Activated T-helper 1 cell treated with anti-CD3 and anti-CD28 coated beads, Interleukin-12 subunit alpha, Interleukin-12 subunit beta, Interleukin-2, Interleukin-4 antibody, amounts not matched to agents 30 ng/mL and 10 ng/mL and 1 ng/mL, durations not matched to agents 14 hours and 24 hours and 36 hours (primary cell): ENCODE measurements at regions of chr6 and their contacts with region 1.

Region 1: DNA sequence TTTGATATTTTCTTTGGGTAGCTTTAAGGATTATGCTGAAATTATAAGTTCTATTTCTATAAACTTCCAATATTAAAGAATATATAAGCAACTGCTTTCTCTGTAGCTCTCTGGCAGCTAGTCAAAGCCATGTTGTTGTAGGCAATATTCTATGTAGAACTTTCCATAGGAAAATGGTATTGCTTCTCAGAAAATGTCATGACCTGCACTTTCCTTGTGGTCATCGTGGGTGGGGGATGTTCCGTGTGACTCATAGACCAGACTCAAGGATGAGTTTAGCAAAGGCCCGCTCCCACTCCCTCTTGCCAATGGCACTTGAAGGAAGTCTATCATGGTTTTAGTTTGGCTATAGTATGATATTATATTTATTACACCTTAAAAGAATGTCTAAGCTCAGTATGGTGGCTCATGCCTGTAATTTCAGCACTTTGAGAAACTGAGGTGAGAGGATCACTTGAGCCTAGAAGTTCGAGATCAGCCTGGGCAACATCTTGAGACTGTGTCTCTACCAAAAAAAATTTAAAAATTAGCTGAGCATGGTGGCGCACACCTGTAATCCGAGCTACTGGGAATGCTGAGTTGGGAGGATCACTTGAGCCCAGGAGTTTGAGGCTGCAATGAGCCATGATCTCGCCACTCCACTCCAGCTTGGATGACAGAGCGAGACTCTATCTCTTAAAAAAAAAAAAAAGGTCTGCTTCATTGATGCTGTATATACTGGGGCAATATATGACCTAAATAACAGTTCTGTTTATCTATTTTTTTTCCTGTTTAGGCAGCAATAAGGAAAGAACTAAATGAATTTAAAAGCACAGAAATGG is 36.6 kb upstream of the LTV1 start:
- DNase-seq: peak; percentile 48
- H3K4me3 Mint-ChIP-seq: peak overlapping the region; percentile 56
- H3K27ac Mint-ChIP-seq: peak overlapping the region; percentile 94
- H3K4me1 Mint-ChIP-seq: peaks cover 55% of the 10 kb centered on the region
- H3K27me3 Mint-ChIP-seq: peaks cover 3% of the 10 kb centered on the region

Region 2: GRCh38 chr6:142850679-142851423 is 955.6 kb before region 1 on chr6:
- intact Hi-C with region 1: loop called (anchors 5 kb)
- DNase-seq: peak; percentile 41
- H3K4me3 Mint-ChIP-seq: peak overlapping the region; percentile 40
- H3K27ac Mint-ChIP-seq: peak overlapping the region; percentile 89
- H3K4me1 Mint-ChIP-seq: peaks cover 91% of the 10 kb centered on the region
- H3K27me3 Mint-ChIP-seq: no peaks in the 10 kb centered on the region

Region 3: DNA sequence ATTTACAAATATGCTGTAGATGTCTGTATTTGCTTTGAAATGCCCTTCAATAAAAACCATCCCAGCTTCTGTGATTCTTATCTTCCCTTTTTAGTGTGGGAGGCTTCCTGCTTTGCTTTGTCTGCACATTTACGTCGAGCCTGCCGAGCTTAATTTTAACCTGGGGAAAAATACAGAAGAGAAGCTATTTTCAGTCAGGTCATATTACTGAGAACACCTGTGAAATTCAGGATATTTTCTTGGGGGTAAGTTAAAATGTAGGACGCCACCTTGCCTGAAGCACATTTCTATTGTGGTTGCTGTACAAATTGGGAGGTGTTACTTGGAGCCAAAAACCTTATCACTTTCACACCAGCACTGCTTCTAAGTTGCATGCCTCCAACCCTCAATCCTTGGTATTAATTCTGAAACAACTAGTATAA is 251.4 kb before region 1 on chr6:
- intact Hi-C with region 1: loop called (anchors 2 kb)
- DNase-seq: no peak
- H3K4me3 Mint-ChIP-seq: peak overlapping the region; percentile 63
- H3K27ac Mint-ChIP-seq: peak overlapping the region; percentile 76
- H3K4me1 Mint-ChIP-seq: peaks cover 85% of the 10 kb centered on the region
- H3K27me3 Mint-ChIP-seq: no peaks in the 10 kb centered on the region

Region 4: DNA sequence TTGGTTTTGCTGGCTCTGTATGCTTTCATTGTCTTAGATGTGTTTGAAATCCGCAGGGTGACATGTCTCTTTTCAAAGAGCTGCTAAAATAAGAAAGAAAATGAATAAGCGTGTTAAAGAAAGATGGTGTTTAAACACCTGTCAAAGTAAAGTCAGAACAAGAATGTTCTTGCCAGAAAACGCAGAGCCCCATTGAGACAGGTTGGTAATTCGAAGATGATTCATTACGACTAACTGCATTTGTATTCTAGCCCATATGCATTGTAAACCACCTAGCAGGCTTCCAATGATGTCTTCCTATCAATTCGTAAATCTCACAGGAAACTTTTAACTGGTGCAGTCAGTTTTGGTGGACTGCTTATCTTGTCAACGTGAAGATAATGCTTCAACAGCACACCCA is 111.9 kb before region 1 on chr6:
- intact Hi-C with region 1: loop called (anchors 5 kb)
- DNase-seq: no peak
- H3K4me3 Mint-ChIP-seq: no peak overlapping the region
- H3K27ac Mint-ChIP-seq: no peak overlapping the region
- H3K4me1 Mint-ChIP-seq: peaks cover 50% of the 10 kb centered on the region
- H3K27me3 Mint-ChIP-seq: no peaks in the 10 kb centered on the region

Region 5: GRCh38 chr6:143759666-143760065 is 46.8 kb before region 1 on chr6:
- intact Hi-C with region 1: no loop called
- DNase-seq: no peak
- H3K4me3 Mint-ChIP-seq: no peak overlapping the region
- H3K27ac Mint-ChIP-seq: peak overlapping the region; percentile 29
- H3K4me1 Mint-ChIP-seq: peaks cover 14% of the 10 kb centered on the region
- H3K27me3 Mint-ChIP-seq: no peaks in the 10 kb centered on the region

Region 6: DNA sequence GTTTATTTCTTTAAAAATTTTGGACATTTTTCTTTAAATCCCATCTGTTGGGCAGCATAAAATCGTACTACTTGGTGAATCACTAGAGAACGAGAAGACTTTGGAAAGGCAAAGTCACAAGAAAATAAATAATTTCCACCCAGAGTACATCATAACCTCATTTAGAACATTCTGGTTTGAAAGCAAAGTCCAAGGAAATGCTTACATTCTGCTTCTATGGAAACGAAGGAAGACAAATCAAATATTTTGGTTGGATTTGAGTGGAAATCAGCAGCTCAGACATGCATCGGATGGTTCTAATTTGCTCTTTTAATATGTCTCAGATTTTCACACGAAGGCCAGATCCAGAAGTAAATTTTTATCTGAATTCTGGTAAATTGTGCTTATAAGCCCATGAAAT is 24.0 kb before region 1 on chr6:
- intact Hi-C with region 1: no loop called
- DNase-seq: no peak
- H3K4me3 Mint-ChIP-seq: no peak overlapping the region
- H3K27ac Mint-ChIP-seq: no peak overlapping the region
- H3K4me1 Mint-ChIP-seq: peaks cover 7% of the 10 kb centered on the region
- H3K27me3 Mint-ChIP-seq: no peaks in the 10 kb centered on the region

Region 7: GRCh38 chr6:143901885-143902750 is 95.6 kb after region 1 on chr6:
- intact Hi-C with region 1: loop called (anchors 1 kb)
- DNase-seq: no peak
- H3K4me3 Mint-ChIP-seq: no peak overlapping the region
- H3K27ac Mint-ChIP-seq: no peak overlapping the region
- H3K4me1 Mint-ChIP-seq: peaks cover 8% of the 10 kb centered on the region
- H3K27me3 Mint-ChIP-seq: no peaks in the 10 kb centered on the region